ENCODE measurements at regions of chr11 and their contacts with region 1.

Region 1: GRCh38 chr11:85595285-85595884 is 31.8 kb downstream of the DLG2 start:
- DNase-seq: no peak
- H3K4me3 Mint-ChIP-seq: no peak overlapping the region
- H3K27ac Mint-ChIP-seq: no peak overlapping the region
- H3K4me1 Mint-ChIP-seq: no peaks in the 10 kb centered on the region
- H3K27me3 Mint-ChIP-seq: no peaks in the 10 kb centered on the region

Region 2: DNA sequence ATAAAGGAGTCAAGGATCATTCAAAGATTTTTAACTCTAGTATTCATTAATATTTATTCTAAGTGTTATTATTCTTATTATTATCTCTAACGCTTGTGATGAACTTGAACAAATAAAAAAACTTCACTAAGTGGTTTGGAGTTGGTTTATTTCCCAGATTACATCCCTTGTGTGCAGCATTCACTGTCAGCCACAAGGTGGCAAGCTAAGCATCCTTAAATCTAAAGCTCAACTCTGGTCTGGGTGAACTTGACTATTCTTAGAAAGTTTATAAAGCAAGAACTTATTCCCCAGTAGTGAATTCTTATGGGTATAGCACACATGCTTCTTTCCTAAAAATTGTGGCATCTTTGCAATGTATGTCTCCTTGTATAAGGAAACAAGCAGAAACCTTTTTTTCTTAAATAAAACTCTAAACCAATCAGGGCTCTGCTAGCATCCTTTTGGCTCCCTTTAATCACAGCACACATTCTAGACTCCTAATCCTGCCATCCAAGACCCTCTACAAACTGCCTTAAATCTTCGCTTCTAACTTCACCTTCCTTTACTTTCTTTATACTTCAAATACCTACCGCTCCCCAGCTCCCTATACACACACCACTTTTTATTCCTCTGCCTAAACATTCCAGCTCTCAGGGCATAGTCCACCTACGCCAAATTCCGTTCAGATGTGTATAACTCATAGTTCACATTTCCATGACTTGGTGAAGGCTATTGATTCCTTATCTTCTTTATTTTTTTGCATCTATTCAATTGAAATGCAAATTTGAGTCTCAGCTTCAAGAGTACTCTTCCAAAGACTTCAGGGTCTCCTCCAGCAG is 1037.1 kb before region 1 on chr11:
- CTCF ChIA-PET with region 1: no interaction called
- intact Hi-C with region 1: loop called (anchors 1 kb)
- DNase-seq: peak; percentile 35
- H3K4me3 Mint-ChIP-seq: no peak overlapping the region
- H3K27ac Mint-ChIP-seq: no peak overlapping the region
- H3K4me1 Mint-ChIP-seq: no peaks in the 10 kb centered on the region
- H3K27me3 Mint-ChIP-seq: no peaks in the 10 kb centered on the region

Region 3: GRCh38 chr11:85444479-85444878 is 150.9 kb before region 1 on chr11:
- CTCF ChIA-PET with region 1: no interaction called
- intact Hi-C with region 1: no loop called
- DNase-seq: no peak
- H3K4me3 Mint-ChIP-seq: no peak overlapping the region
- H3K27ac Mint-ChIP-seq: no peak overlapping the region
- H3K4me1 Mint-ChIP-seq: no peaks in the 10 kb centered on the region
- H3K27me3 Mint-ChIP-seq: no peaks in the 10 kb centered on the region

Region 4: DNA sequence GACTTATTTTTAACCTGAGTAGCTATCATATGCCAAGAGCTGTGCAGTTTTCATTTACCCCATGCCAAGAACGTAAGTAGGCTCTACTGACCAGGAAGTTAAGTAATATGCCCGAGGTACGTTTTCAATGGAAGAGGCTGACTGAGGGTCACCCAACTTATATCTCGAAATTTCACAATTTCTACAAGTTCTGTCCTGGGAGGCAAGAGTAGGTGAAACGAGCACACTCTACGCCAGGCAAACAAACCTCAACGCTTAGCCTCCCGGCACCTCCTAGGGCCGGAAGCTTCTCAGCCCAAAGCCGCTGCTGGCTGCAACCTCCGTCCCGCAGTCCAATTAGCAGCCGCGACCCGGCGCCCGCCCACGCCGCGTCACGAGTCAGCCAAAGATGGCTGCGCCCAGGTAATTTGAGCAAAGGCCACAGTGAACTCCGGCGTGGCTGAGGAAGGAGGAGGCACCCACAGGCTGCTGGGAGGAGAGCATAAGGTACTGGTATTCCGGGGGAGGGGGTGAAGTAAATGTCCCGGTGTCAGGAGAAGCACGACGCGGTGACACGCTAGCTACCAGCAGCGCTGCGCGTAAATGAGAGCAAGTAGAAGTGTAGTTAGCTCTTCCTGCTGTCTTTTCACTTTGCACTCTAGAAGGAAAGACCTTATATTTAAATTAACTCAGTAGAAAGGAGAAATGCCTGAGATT is 52.4 kb after region 1 on chr11 and contains the start of gene TMEM126A:
- CTCF ChIA-PET with region 1: interaction called, 5 read pairs
- intact Hi-C with region 1: loop called (anchors 1 kb)
- DNase-seq: peak; percentile 96
- H3K4me3 Mint-ChIP-seq: peak within 1 kb of the TSS; percentile 90
- H3K27ac Mint-ChIP-seq: peak within 1 kb of the TSS; percentile 96
- H3K4me1 Mint-ChIP-seq: peaks cover 29% of the 10 kb centered on the region
- H3K27me3 Mint-ChIP-seq: peaks cover 6% of the 10 kb centered on the region
- total RNA-seq, gene TMEM126A: 47.5 to 56.2 TPM

Region 5: GRCh38 chr11:85941380-85941973 is 346.1 kb after region 1 on chr11:
- CTCF ChIA-PET with region 1: no interaction called
- intact Hi-C with region 1: loop called (anchors 2 kb)
- DNase-seq: peak; percentile 76
- H3K4me3 Mint-ChIP-seq: no peak overlapping the region
- H3K27ac Mint-ChIP-seq: no peak overlapping the region
- H3K4me1 Mint-ChIP-seq: peaks cover 18% of the 10 kb centered on the region
- H3K27me3 Mint-ChIP-seq: no peaks in the 10 kb centered on the region

Region 6: GRCh38 chr11:86418917-86419316 is 823.5 kb after region 1 on chr11:
- CTCF ChIA-PET with region 1: no interaction called
- intact Hi-C with region 1: loop called (anchors 2 kb)
- DNase-seq: peak; percentile 18
- H3K4me3 Mint-ChIP-seq: no peak overlapping the region
- H3K27ac Mint-ChIP-seq: no peak overlapping the region
- H3K4me1 Mint-ChIP-seq: peaks cover 3% of the 10 kb centered on the region
- H3K27me3 Mint-ChIP-seq: no peaks in the 10 kb centered on the region

Measured in activated naive CD4-positive, alpha-beta T cell treated with anti-CD3 and anti-CD28 coated beads for 36 hours (primary cell).